Heart left ventricle (tissue), 16 donors: ENCODE measurements at regions of chr11 and their contacts with region 1.

Region 1: GRCh38 chr11:9314291-9315036 is at the start of gene TMEM41B:
- DNase-seq: peak; percentile 98 to 100 (median 99)
- ATAC-seq: peak; percentile 99 to 100 (median 99)
- H3K4me3 ChIP-seq: peak within 1 kb of the TSS; percentile 67 to 100 (median 91)
- H3K27ac ChIP-seq: peak within 1 kb of the TSS; percentile 51 to 96 (median 88)
- H3K4me1 ChIP-seq: peaks cover 0 to 34% (median 15%) of the 10 kb centered on the region in 12 donors
- H3K27me3 ChIP-seq: peaks cover 0 to 4% (median 0%) of the 10 kb centered on the region in 9 donors
- CTCF ChIP-seq: peak in 6 of 12 donors; percentile 1 to 44 (median 16)
- POLR2A ChIP-seq: peak; percentile 26 to 84
- total RNA-seq, gene TMEM41B: 17.7 to 27.8 (median 22.6) TPM

Region 2: GRCh38 chr11:8754241-8754640 is 560.2 kb before region 1 on chr11:
- intact Hi-C with region 1: no loop called
- DNase-seq: no peak
- ATAC-seq: no peak
- H3K4me3 ChIP-seq: no peak overlapping the region
- H3K27ac ChIP-seq: peak overlapping the region in 1 of 12 donors; percentile 86
- H3K4me1 ChIP-seq: peaks cover 0 to 53% (median 25%) of the 10 kb centered on the region in 12 donors
- H3K27me3 ChIP-seq: no peaks in the 10 kb centered on the region
- CTCF ChIP-seq: no peak
- POLR2A ChIP-seq: no peak

Region 3: DNA sequence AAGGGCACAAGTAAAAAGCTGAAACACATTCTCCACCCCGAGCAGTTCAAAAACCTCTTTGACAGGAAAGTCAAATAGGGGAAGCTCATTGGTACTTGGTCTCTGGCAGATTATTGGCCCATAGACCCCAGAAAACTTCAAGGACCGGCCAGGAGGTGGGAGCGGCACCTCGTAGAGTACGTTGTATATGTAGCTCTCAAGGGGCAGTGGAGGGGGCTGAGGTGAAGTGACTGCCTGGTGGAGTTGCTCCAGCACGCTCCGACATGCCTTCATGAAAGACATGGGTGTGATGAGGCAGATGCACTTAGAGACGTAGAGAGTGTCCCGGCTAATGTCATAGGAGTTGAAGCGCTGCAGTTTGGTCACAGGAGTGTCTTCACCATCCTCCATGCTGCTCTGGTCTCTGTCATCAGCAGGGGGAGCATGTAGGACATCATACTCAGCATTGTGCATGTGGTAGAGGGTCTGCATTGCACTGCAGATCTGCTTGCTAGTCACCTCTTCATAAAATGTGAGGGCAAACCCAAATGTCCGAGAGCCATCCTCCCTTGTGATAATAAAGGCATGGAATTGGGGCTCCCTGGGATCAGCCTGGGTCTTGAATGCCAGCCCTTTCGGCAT is 110.7 kb before region 1 on chr11:
- intact Hi-C with region 1: loop called in 1 of 10 experiments (anchors 2 kb)
- DNase-seq: peak in 1 of 5 donors; percentile 33
- ATAC-seq: peak; percentile 45 to 74 (median 60)
- H3K4me3 ChIP-seq: no peak overlapping the region
- H3K27ac ChIP-seq: no peak overlapping the region
- H3K4me1 ChIP-seq: peaks cover 0 to 82% (median 29%) of the 10 kb centered on the region in 12 donors
- H3K27me3 ChIP-seq: no peaks in the 10 kb centered on the region
- CTCF ChIP-seq: peak in 8 of 12 donors; percentile 21 to 53 (median 36)
- POLR2A ChIP-seq: no peak

Region 4: DNA sequence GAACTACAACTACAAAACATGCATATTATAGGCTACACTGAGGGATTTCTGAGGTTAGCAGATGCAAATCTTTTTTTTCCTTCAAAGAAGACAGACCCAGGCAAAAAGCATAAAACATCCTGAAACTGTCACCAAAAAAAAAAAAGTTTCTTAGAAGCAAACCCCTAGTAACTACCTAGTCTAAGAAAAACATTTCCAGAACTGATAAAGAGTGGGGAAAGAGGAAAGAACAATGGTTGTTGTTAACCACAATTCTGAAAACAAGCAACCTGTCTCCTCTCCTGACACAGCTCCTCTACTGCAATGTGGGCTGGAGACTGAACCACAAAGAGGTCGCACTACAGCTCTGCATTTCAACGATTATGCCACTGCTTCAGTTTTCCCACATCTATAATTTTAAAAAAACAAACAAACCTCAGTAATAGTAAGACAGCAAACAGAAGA is 64.3 kb before region 1 on chr11:
- intact Hi-C with region 1: no loop called
- DNase-seq: no peak
- ATAC-seq: no peak
- H3K4me3 ChIP-seq: no peak overlapping the region
- H3K27ac ChIP-seq: peak overlapping the region in 4 of 12 donors; percentile 0 to 79 (median 32)
- H3K4me1 ChIP-seq: peaks cover 6 to 76% (median 42%) of the 10 kb centered on the region in 12 donors
- H3K27me3 ChIP-seq: no peaks in the 10 kb centered on the region
- CTCF ChIP-seq: no peak
- POLR2A ChIP-seq: no peak

Region 5: GRCh38 chr11:9273376-9274336 is 40.8 kb before region 1 on chr11:
- intact Hi-C with region 1: loop called in 2 of 10 experiments (anchors 5 kb)
- DNase-seq: no peak
- ATAC-seq: peak in 2 of 4 donors; percentile 29 to 64
- H3K4me3 ChIP-seq: no peak overlapping the region
- H3K27ac ChIP-seq: peak overlapping the region in 7 of 12 donors; percentile 38 to 64 (median 52)
- H3K4me1 ChIP-seq: peaks cover 0 to 25% (median 14%) of the 10 kb centered on the region in 12 donors
- H3K27me3 ChIP-seq: no peaks in the 10 kb centered on the region
- CTCF ChIP-seq: no peak
- POLR2A ChIP-seq: no peak

Region 6: GRCh38 chr11:9363954-9364912 is 49.8 kb after region 1 on chr11:
- intact Hi-C with region 1: loop called in 8 of 10 experiments (anchors 1 to 10 kb)
- DNase-seq: peak; percentile 96 to 99 (median 97)
- ATAC-seq: peak; percentile 95 to 99 (median 99)
- H3K4me3 ChIP-seq: peak overlapping the region in 10 of 12 donors; percentile 39 to 65 (median 54)
- H3K27ac ChIP-seq: peak overlapping the region; percentile 91 to 100 (median 99)
- H3K4me1 ChIP-seq: peaks cover 0 to 25% (median 13%) of the 10 kb centered on the region in 12 donors
- H3K27me3 ChIP-seq: no peaks in the 10 kb centered on the region
- CTCF ChIP-seq: peak in 2 of 12 donors; percentile 6 to 7
- POLR2A ChIP-seq: peak in 1 of 2 donors; percentile 90

Region 7: DNA sequence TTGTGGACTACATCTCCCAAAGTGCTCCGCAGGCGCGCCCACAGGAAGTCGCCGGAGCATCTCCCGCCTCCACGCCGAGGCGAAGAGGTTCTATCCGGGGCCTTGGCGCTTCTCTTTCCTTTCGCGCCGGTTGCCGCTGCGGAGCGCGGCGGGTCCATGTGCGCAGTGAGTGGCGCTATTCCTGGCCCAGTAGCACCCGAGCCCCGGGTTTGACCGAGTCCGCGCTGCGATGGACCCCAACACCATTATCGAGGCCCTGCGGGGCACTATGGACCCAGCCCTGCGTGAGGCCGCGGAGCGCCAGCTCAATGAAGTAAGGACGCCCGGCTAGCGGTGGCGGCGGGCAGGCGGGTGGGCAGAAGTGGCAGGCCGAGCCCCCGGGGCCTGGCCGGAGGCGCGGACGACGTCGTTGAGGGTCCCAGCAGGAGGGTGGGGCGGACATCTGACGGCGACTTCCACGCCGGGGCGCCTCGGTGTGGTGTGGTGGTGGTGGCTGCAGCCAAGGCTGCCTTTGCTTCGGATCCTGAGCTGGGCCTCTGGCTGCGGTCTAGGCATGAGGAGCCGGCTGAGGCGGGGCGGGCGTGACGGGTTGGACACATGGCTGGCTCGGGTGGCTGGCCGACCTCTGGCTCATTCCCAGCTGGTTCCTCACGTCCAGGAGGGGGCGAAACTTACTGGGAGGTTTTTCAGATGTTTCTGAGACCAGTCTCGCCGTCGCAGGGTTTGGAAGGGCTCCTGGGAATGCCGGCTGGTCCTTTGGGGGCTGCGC is 70.3 kb after region 1 on chr11 and contains the start of gene IPO7:
- intact Hi-C with region 1: loop called in 3 of 10 experiments (anchors 2 to 5 kb)
- DNase-seq: peak; percentile 90 to 95 (median 94)
- ATAC-seq: peak; percentile 92 to 97 (median 96)
- H3K4me3 ChIP-seq: peak within 1 kb of the TSS; percentile 74 to 96 (median 89)
- H3K27ac ChIP-seq: peak within 1 kb of the TSS; percentile 72 to 97 (median 95)
- H3K4me1 ChIP-seq: peaks cover 0 to 42% (median 20%) of the 10 kb centered on the region in 12 donors
- H3K27me3 ChIP-seq: no peaks in the 10 kb centered on the region
- CTCF ChIP-seq: peak in 6 of 12 donors; percentile 15 to 49 (median 35)
- POLR2A ChIP-seq: peak in 1 of 2 donors; percentile 77
- total RNA-seq, gene IPO7: 71.7 to 200 (median 141) TPM

Region 8: GRCh38 chr11:9460322-9461067 is 146.0 kb after region 1 on chr11 and contains the start of gene ZNF143:
- intact Hi-C with region 1: loop called in 2 of 10 experiments (anchors 5 to 10 kb)
- DNase-seq: peak; percentile 100
- ATAC-seq: peak; percentile 96 to 99 (median 98)
- H3K4me3 ChIP-seq: peak within 1 kb of the TSS; percentile 80 to 99 (median 91)
- H3K27ac ChIP-seq: peak within 1 kb of the TSS; percentile 98 to 100 (median 100)
- H3K4me1 ChIP-seq: peaks cover 0 to 27% (median 20%) of the 10 kb centered on the region in 12 donors
- H3K27me3 ChIP-seq: no peaks in the 10 kb centered on the region
- CTCF ChIP-seq: peak in 1 of 12 donors; percentile 3
- POLR2A ChIP-seq: peak; percentile 76 to 91
- total RNA-seq, gene ZNF143: 16.8 to 32.3 (median 22.0) TPM